Psoas muscle (tissue), 8 donors: ENCODE measurements at regions of chr12 and their contacts with region 1.

Region 1: GRCh38 chr12:69570545-69571399 is 14.5 kb upstream of the CCT2 start:
- DNase-seq: no peak
- ATAC-seq: peak; percentile 69 to 90 (median 77)
- H3K4me3 ChIP-seq: no peak overlapping the region
- H3K27ac ChIP-seq: peak overlapping the region; percentile 36
- H3K4me1 ChIP-seq: peaks cover 4% of the 10 kb centered on the region
- H3K27me3 ChIP-seq: no peaks in the 10 kb centered on the region
- CTCF ChIP-seq: peak; percentile 83

Region 2: DNA sequence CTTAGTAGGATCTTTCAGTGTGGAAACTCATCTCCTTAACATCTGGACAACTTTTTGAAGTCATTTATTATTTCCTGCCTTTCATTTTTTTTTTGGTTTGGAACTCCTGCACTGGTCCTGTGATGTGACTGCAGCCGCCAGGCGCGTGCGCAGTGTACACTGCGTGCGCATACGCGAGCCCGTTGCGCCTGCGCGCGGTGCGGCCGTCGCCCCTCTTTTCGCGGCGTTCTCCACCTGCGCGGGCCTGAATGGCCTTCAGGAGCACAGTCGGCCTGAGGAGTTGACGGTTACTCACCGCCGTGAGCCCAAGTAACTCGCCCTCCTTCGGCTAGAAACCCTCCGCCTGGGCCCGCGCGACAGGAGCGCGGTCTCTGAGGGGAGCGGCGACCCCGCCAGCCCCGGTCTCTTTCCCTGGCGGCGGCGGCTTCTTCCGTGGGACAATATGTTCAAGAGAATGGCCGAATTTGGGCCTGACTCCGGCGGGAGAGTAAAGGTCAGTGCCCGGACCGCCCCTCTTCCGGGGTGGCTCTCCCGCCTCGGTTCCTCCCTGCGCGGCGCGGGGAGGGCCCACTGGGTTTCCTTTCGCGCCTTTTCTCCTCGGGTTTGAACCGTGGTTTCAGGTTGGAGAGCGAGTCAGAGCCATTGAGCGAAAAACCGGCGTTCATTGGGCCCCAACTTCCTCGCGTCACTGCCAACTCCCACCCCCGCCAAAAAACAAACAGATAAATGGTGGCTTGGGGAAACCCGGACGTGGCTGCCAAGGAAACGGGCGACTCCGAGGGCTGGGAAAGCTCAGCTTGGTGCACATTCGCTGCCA is 211.0 kb before region 1 on chr12 and contains the start of gene YEATS4:
- intact Hi-C with region 1: loop called (anchors 5 kb)
- DNase-seq: peak; percentile 83 to 91
- ATAC-seq: peak; percentile 97 to 99 (median 98)
- H3K4me3 ChIP-seq: peak within 1 kb of the TSS; percentile 74
- H3K27ac ChIP-seq: peak within 1 kb of the TSS; percentile 82
- H3K4me1 ChIP-seq: peaks cover 13% of the 10 kb centered on the region
- H3K27me3 ChIP-seq: no peaks in the 10 kb centered on the region
- CTCF ChIP-seq: no peak
- total RNA-seq, gene YEATS4: 6.2 to 12.4 (median 9.5) TPM

Region 3: DNA sequence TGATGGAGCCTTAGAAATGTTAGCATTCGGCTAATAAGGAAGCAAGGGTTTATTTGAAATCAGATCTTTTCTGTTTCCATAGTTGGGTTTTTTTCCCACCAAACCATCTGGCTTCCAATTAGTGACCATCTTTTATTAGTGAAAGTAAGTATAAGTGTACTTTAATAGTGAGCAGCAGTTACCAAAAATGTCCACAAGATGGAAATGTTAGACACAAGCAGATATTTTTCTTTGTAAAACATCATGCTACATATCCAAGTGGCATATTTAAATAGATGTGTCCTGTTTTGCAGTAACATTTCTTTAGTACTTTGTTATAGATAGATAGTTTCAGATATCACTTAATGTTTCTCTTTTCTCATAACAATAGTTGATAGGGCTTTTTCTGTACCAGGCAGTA is 182.4 kb before region 1 on chr12:
- intact Hi-C with region 1: loop called in 1 of 2 experiments (anchors 10 kb)
- DNase-seq: no peak
- ATAC-seq: no peak
- H3K4me3 ChIP-seq: no peak overlapping the region
- H3K27ac ChIP-seq: no peak overlapping the region
- H3K4me1 ChIP-seq: no peaks in the 10 kb centered on the region
- H3K27me3 ChIP-seq: no peaks in the 10 kb centered on the region
- CTCF ChIP-seq: peak; percentile 53

Region 4: DNA sequence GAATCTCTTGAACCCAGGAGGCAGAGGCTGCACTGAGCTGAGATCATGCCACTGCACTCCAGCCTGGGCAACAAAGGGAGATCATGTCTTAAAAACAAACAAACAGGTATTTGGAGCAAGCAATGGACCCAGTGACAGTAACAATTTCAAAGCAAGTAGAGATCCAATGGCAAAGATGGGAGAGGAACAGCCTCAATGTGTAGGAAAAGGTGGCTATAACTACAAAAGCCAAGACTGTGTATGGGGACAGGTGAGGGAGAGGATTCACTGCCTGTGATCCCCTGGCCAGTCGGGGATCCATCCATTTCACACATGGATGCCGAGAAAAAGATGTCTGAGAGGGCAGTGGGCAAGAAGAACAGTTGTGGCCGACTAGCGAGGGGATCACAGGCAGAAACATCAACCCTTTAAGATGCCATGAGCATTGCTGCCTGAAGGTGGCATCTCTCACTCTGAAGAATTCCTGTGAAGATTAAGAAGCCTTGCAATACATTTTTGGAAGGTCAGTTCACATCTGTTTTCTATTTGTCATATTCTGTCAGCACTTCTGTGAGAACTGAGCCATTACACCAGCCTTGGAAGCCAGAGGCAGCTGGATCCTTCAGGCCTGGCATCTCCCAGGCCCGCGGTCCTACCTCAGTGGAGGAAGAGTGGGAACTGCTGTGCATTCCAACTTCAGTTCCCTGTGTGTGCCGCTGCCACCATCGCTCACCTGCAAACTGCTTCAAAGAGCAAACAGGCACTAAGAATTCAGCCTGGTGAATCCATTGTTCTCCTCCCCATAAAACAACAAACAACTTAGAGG is 155.1 kb before region 1 on chr12:
- intact Hi-C with region 1: loop called (anchors 5 kb)
- DNase-seq: peak; percentile 34 to 70
- ATAC-seq: peak; percentile 89 to 98 (median 97)
- H3K4me3 ChIP-seq: no peak overlapping the region
- H3K27ac ChIP-seq: no peak overlapping the region
- H3K4me1 ChIP-seq: peaks cover 13% of the 10 kb centered on the region
- H3K27me3 ChIP-seq: no peaks in the 10 kb centered on the region
- CTCF ChIP-seq: peak; percentile 81

Region 5: GRCh38 chr12:69470189-69471075 is 100.3 kb before region 1 on chr12 and contains the start of gene FRS2:
- intact Hi-C with region 1: loop called (anchors 2 kb)
- DNase-seq: peak; percentile 92 to 95
- ATAC-seq: peak; percentile 99
- H3K4me3 ChIP-seq: peak within 1 kb of the TSS; percentile 71
- H3K27ac ChIP-seq: peak within 1 kb of the TSS; percentile 84
- H3K4me1 ChIP-seq: peaks cover 38% of the 10 kb centered on the region
- H3K27me3 ChIP-seq: no peaks in the 10 kb centered on the region
- CTCF ChIP-seq: peak; percentile 10
- total RNA-seq, gene FRS2: 12.8 to 18.9 (median 15.0) TPM

Region 6: DNA sequence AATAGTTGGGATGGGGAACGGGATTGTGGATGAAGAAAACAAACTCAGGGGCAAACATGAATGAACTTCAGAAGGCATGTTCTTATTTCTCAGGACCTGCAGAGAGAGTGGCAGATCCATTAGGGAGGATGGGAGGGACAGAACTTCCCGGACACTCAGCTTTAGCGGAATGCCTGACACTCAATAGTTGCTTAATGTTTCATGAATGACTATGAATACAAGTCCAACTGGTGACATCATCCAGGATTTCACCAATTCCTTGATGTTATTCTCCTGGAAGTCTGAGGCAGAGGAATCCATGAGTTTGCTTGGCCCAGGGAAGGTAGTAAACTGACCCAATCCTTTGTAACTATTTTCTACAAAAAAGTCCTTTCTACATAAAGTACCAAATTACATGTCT is 77.7 kb after region 1 on chr12:
- intact Hi-C with region 1: no loop called
- DNase-seq: no peak
- ATAC-seq: peak; percentile 17 to 68 (median 53)
- H3K4me3 ChIP-seq: no peak overlapping the region
- H3K27ac ChIP-seq: no peak overlapping the region
- H3K4me1 ChIP-seq: peaks cover 10% of the 10 kb centered on the region
- H3K27me3 ChIP-seq: no peaks in the 10 kb centered on the region
- CTCF ChIP-seq: no peak